ENCODE measurements at regions of chr5 and their contacts with region 1.

Region 1: DNA sequence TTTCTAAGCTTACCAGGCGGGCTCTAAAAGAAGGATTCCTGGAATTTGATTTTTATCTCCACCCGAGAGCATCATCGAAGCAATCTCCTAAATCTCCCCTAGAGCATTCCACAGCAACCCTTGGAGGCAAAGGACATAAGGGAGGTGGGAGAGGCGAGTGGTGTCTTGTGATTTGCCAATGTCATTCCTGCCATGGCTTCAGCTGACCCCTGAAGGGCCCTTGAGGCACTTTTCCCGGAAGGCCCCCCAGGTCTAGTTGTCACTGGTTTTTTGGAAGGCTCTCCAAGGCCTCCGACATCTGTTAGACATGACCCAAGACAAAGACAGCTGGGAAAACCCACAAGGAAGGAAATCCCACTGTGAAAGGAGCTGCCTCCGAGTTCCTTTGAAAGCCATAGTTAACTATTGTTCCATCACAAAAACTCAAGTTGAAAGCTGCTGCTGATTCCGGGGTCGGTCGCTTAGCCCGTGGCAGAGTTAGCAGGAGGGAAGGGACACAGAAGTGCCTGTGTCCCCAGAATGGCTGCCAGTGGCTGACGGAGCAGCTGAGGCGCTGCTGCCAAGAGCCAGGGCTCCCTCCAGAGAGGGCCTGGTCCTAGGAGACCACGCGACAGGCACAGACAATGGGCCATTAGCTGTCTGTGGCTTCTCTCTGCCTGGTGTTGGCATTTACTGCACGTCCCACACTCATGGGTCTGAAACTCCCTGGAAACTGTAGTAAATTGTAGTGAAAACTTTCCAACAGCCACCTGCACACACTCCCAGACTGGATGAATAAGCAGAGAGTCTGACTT is 24.4 kb upstream of the TRIO start:
- DNase-seq: peak; percentile 42 to 46
- ATAC-seq: peak; percentile 66 to 94 (median 80)
- H3K4me3 ChIP-seq: no peak overlapping the region
- H3K27ac ChIP-seq: peak overlapping the region in 9 of 10 donors; percentile 0 to 80 (median 47)
- H3K4me1 ChIP-seq: peaks cover 0 to 32% (median 17%) of the 10 kb centered on the region in 9 donors
- H3K27me3 ChIP-seq: no peaks in the 10 kb centered on the region
- CTCF ChIP-seq: no peak

Region 2: GRCh38 chr5:14089198-14089597 is 29.5 kb before region 1 on chr5:
- intact Hi-C with region 1: loop called in 1 of 10 experiments (anchors 2 kb)
- DNase-seq: no peak
- ATAC-seq: no peak
- H3K4me3 ChIP-seq: no peak overlapping the region
- H3K27ac ChIP-seq: no peak overlapping the region
- H3K4me1 ChIP-seq: no peaks in the 10 kb centered on the region
- H3K27me3 ChIP-seq: no peaks in the 10 kb centered on the region
- CTCF ChIP-seq: no peak

Region 3: DNA sequence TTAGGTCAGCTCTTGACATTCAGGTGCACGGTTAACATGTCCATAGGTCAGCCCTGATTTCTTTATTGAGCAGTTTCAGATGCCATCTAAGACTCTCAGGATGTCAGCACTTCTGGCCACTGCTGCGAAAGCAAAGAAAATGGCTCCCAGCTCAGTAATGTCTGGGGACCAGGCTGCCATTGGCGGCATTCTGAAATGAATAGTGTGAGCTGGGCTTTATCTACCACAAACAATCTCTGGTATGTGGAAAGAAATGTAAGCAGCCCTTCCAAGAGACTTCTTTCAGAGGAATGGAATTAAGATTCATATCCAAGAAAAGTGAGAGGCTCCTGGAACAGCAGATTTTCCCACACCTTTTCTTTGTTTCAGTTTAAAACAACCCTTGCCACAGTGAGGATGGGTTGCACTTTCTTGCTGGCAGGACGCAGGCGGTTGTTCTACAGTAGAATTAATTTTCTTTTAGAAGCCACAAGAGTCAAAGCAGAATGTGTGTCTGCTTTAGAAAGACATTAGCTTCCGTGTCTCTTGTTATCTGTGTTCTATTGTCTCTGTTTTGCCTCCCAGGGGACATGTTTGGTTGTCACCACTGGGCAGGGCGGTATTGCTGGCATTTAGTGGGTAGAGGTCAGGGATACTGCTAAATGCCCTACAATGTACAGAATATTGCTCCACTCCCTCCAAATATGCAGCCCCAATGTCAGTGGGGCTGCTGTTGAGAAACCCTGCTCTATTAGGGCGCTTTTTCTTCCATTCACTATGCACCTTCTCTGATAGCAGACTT is 902.7 kb after region 1 on chr5:
- intact Hi-C with region 1: no loop called
- DNase-seq: no peak
- ATAC-seq: peak; percentile 55 to 86 (median 72)
- H3K4me3 ChIP-seq: peak overlapping the region in 5 of 10 donors; percentile 4 to 34 (median 22)
- H3K27ac ChIP-seq: peak overlapping the region in 9 of 10 donors; percentile 21 to 87 (median 70)
- H3K4me1 ChIP-seq: peaks cover 0 to 20% (median 14%) of the 10 kb centered on the region in 9 donors
- H3K27me3 ChIP-seq: no peaks in the 10 kb centered on the region
- CTCF ChIP-seq: no peak